ENCODE measurements at regions of chr11 and their contacts with region 1.

Region 1: GRCh38 chr11:9573052-9573774 is at the start of gene WEE1:
- DNase-seq: peak; percentile 98
- H3K4me3 Mint-ChIP-seq: peak within 1 kb of the TSS; percentile 79
- H3K27ac Mint-ChIP-seq: peak within 1 kb of the TSS; percentile 99
- H3K4me1 Mint-ChIP-seq: peaks cover 20% of the 10 kb centered on the region
- H3K27me3 Mint-ChIP-seq: no peaks in the 10 kb centered on the region
- CTCF ChIP-seq: no peak
- total RNA-seq, gene WEE1: 28.7 and 34.5 TPM in 2 replicates

Region 2: DNA sequence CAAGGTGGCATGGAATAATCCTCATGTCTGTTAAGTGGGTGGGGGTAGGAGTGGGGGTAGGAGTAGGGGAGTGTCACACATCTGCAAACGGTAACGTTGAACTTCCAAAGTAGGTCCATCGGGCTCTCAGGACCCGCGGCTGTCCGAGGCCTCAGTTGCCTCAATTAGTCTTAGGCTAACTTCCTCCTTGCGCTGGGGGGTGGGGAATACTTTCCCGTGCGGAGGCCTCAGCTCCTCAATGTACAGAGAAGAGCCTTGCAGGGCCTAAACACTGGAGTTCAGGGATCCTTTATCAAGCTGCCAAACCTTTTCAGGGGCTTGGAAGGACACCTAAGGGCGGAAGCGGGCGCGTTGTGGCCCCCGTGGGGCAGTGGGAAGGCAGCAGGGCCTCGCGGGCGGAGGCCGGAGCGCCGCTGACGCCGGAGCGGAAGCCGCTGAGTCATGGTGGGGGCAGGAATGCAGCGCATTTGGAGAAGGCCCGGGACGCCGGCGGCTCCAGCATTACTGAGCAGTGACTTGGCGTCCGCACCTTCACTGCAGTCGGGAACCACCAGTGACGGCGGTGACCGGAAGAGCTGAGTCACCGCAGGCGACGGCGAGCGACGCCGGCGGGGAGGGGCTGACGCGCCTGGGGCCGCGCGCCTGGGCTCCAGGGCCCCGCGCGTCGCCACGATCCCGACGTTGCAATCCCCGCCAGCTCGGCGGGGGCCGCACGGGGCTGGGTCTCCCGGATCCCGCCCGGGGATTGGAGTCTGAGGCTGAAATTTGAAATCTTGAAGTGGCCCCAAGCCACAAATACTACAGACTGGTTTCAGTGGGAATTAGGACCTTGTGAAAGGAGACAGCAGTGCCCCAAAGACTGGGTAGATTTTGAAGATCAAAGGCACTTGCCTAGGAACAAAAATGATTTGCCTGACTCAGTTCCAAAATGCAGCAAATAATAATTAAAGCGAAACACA is 209.0 kb before region 1 on chr11:
- CTCF ChIA-PET with region 1: no interaction called
- POLR2A ChIA-PET with region 1: interaction called, 6 read pairs
- intact Hi-C with region 1: loop called (anchors 5 kb)
- DNase-seq: peak; percentile 95
- H3K4me3 Mint-ChIP-seq: peak overlapping the region; percentile 74
- H3K27ac Mint-ChIP-seq: peak overlapping the region; percentile 98
- H3K4me1 Mint-ChIP-seq: peaks cover 12% of the 10 kb centered on the region
- H3K27me3 Mint-ChIP-seq: no peaks in the 10 kb centered on the region
- CTCF ChIP-seq: no peak

Region 3: DNA sequence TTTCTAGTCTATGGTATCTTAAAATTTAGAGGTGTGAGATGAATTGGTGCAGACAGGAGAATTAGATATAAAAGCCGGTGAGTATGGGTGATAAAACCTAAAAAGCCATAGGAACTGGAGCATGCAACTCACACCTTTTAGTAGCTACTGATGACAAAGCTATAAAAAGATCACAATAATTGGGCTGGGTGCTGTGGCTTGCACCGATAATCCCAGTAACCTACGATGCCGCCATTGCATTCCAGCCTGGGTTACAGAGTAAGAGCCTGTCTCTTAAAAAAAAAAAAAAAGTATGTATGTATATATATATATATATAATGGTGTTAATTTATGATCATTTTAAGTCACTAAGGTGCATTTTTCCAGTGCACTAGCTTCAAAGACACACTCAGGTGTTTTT is 17.5 kb after region 1 on chr11:
- CTCF ChIA-PET with region 1: no interaction called
- POLR2A ChIA-PET with region 1: interaction called, 56 read pairs
- intact Hi-C with region 1: no loop called
- DNase-seq: no peak
- H3K4me3 Mint-ChIP-seq: no peak overlapping the region
- H3K27ac Mint-ChIP-seq: no peak overlapping the region
- H3K4me1 Mint-ChIP-seq: peaks cover 10% of the 10 kb centered on the region
- H3K27me3 Mint-ChIP-seq: no peaks in the 10 kb centered on the region
- CTCF ChIP-seq: no peak

Region 4: DNA sequence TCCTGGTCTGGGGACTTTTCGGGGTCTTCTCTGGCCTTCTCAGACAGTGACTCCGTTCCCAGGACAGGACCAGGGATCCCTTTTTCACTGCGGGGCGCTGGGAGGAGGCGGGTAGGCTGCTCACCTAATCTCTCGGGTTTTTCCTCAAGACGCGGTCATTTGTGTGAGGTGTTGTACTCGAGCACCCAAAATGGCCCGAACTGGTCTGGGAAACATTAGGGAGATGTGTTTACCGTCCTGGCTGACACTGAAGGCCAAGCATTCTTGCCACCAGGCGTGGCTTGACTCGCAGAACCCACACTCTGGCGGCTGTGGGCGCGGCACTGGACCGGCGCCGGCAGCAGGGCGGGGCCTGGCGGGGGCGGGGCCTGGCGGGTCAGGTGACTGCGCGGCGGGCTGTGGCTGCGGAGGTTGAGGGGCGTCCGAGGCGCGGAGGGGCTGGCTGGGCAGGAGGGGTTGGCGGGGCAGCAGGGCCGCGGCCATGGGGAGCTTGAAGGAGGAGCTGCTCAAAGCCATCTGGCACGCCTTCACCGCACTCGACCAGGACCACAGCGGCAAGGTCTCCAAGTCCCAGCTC is 90.6 kb after region 1 on chr11 and contains the start of gene SWAP70:
- CTCF ChIA-PET with region 1: interaction called, 3 read pairs
- POLR2A ChIA-PET with region 1: interaction called, 12 read pairs
- intact Hi-C with region 1: no loop called
- DNase-seq: peak; percentile 75
- H3K4me3 Mint-ChIP-seq: peak within 1 kb of the TSS; percentile 91
- H3K27ac Mint-ChIP-seq: peak within 1 kb of the TSS; percentile 88
- H3K4me1 Mint-ChIP-seq: peaks cover 6% of the 10 kb centered on the region
- H3K27me3 Mint-ChIP-seq: no peaks in the 10 kb centered on the region
- CTCF ChIP-seq: peak; percentile 33
- total RNA-seq, gene SWAP70: 13.0 and 24.2 TPM in 2 replicates

Region 5: GRCh38 chr11:9748361-9748970 is 175.3 kb after region 1 on chr11:
- CTCF ChIA-PET with region 1: interaction called, 6 read pairs
- POLR2A ChIA-PET with region 1: interaction called, 11 read pairs
- intact Hi-C with region 1: loop called (anchors 1 kb)
- DNase-seq: peak; percentile 75
- H3K4me3 Mint-ChIP-seq: no peak overlapping the region
- H3K27ac Mint-ChIP-seq: no peak overlapping the region
- H3K4me1 Mint-ChIP-seq: peaks cover 6% of the 10 kb centered on the region
- H3K27me3 Mint-ChIP-seq: no peaks in the 10 kb centered on the region
- CTCF ChIP-seq: peak; percentile 90

Measured in MCF 10A (cell line).